HCT116 (cell line): ENCODE measurements at regions of chr15 and their contacts with region 1.

Region 1: DNA sequence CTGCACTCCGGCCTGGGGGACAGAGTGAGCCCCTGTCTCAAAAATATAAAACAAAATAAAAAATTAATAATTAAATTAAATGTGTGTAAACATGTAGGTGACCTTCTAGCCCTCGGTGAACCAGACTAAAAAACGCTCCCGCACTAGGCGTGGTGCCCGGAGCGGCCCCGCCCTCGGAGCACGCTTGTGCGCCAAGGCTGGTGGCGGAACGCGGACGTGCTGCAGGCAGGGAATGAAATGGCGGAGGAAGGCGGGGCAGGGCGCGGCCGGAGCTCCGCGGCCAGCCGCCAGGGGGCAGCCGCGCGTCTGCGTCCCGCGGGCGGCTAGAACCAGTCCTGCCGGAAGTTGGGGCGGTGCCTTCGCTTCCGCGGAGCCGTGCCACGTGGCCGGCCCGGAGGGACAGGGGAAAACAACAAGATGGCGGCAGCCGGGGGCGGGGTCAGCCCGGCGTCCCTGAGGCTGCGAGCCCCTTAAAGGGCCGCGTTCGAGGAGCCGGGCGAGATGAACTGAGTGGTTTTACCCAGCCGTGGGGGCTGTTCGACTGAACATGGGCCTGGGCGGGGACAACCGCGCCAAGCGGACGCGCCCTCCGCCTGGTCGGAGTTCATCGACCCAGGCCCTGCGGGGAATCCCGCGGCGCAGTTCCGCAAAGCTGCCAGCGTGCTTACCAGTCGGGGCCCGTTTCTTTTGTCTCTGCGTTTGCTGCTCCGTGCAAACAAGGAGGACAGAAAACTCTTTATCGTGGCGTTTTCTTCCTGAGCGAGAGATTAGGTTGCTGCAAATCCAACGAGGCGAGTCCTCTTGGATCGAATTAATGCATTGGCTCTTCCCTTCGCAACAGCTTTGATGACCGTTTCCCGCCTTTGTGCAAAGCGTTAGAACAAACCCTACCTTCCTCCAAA is 90.9 kb upstream of the CHD2 start:
- DNase-seq: peak; percentile 83
- ATAC-seq: peak; percentile 81
- H3K4me3 ChIP-seq: peak overlapping the region; percentile 39 to 58
- H3K27ac ChIP-seq: peak overlapping the region; percentile 77
- H3K4me1 ChIP-seq: peaks cover 48 to 69% of the 10 kb centered on the region in 2 experiments
- H3K27me3 ChIP-seq: no peaks in the 10 kb centered on the region
- CTCF ChIP-seq: peak in 2 of 3 experiments; percentile 85 to 92; a peak in 4 of 6 replicates
- POLR2A ChIP-seq: peak; percentile 79
- RAD21 ChIP-seq: no peak

Region 2: GRCh38 chr15:92903941-92904831 is 95.0 kb after region 1 on chr15:
- CTCF ChIA-PET with region 1: interaction called, 14 read pairs
- POLR2A ChIA-PET with region 1: interaction called, 23 read pairs
- RAD21 ChIA-PET with region 1: interaction called in 1 of 2 experiments, 3 read pairs
- intact Hi-C with region 1: loop called (anchors 1 kb)
- DNase-seq: peak; percentile 96
- ATAC-seq: peak; percentile 86
- H3K4me3 ChIP-seq: peak overlapping the region; percentile 69 to 72
- H3K27ac ChIP-seq: peak overlapping the region; percentile 97
- H3K4me1 ChIP-seq: peaks cover 48 to 70% of the 10 kb centered on the region in 2 experiments
- H3K27me3 ChIP-seq: no peaks in the 10 kb centered on the region
- CTCF ChIP-seq: no peak
- POLR2A ChIP-seq: peak; percentile 37
- RAD21 ChIP-seq: 0 out of 2 replicates have a peak, but pooled peaks have one; percentile 21